HepG2 (cell line): ENCODE measurements at regions of chr12 and their contacts with region 1.

Region 1: DNA sequence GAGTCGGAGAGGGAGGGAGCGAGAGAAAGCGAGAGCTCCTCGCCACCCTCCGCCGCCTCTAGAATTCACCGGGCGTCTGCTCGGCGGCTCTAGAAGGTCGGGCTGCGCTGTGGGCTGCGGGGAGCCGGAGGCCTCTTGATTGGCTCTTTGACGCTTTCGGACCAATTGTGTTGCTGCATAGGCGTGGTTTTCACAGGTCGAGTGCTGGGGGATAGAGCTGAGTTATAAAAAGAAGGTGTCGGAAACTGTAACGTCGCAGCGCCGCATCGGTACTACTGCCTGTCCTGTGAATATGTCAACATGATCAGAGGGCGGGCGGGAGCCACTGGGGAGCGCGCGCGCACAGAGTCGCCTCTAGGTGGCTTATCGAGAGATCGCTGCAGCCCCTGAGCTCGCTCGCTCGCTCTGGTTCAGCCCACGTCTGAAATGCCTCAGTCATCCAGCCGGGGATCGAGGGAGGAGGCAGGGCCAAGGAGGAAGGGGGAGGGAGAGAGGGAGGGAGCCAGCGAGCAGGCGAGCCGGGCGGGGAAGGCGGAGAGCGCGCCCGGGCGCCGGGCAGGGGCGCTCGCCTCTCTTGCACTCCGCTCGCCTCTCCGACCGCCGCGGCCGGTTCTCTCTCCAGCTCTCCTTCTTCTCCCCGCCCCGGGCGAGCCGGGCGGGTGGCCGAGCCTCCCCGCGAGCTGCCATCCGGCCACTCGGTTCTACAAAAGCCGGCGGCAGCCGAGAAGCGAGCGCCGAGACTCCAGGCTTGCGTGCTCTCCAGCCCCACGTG is at the start of gene TBX3:
- DNase-seq: peak; percentile 98
- ATAC-seq: peak; percentile 92
- H3K4me3 ChIP-seq: peak within 1 kb of the TSS; percentile 81 to 97 (median 97)
- H3K27ac ChIP-seq: peak within 1 kb of the TSS; percentile 96
- H3K4me1 ChIP-seq: peaks cover 28% of the 10 kb centered on the region
- H3K27me3 ChIP-seq: no peaks in the 10 kb centered on the region; a peak in 1 of 5 replicates
- CTCF ChIP-seq: peak; percentile 91
- EP300 ChIP-seq: peak in 1 of 2 experiments; percentile 28; a peak in 2 of 4 replicates
- POLR2A ChIP-seq: peak; percentile 88 to 91
- RAD21 ChIP-seq: peak; percentile 86
- total RNA-seq, gene TBX3: 17.2 and 27.1 TPM in 2 replicates

Region 2: DNA sequence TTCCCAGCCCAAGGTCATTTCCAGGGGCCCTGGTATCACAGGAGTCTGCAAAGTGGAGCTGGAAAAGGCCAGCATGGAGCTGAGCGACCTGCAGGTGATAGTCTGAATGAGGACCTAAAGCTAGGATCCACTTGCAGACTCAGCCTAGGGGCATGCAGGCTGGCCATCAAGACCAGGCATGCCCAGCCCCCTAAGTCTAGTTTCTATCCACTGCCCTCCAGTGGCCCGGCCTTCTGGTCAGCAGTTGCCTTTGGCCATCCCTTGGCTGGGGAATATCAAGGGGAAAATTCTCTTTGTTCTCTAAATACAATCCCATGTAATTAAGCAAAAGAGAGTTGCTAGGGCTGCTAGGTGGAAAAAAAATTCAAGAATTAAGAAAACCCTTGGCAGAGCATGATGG is 1116.3 kb before region 1 on chr12:
- CTCF ChIA-PET with region 1: no interaction called
- POLR2A ChIA-PET with region 1: no interaction called
- in situ Hi-C with region 1: no loop called
- intact Hi-C with region 1: no loop called
- DNase-seq: no peak
- ATAC-seq: no peak
- H3K4me3 ChIP-seq: no peak overlapping the region
- H3K27ac ChIP-seq: no peak overlapping the region
- H3K4me1 ChIP-seq: no peaks in the 10 kb centered on the region
- H3K27me3 ChIP-seq: peaks cover 4 to 39% of the 10 kb centered on the region in 2 experiments
- CTCF ChIP-seq: no peak
- EP300 ChIP-seq: no peak
- POLR2A ChIP-seq: no peak
- RAD21 ChIP-seq: no peak

Region 3: GRCh38 chr12:114668151-114668885 is 16.0 kb before region 1 on chr12:
- CTCF ChIA-PET with region 1: no interaction called
- POLR2A ChIA-PET with region 1: interaction called, 101 read pairs
- in situ Hi-C with region 1: no loop called
- intact Hi-C with region 1: no loop called
- DNase-seq: peak; percentile 93
- ATAC-seq: peak; percentile 89
- H3K4me3 ChIP-seq: peak overlapping the region; percentile 64 to 81 (median 79)
- H3K27ac ChIP-seq: peak overlapping the region; percentile 79
- H3K4me1 ChIP-seq: peaks cover 45% of the 10 kb centered on the region
- H3K27me3 ChIP-seq: no peaks in the 10 kb centered on the region
- CTCF ChIP-seq: peak; percentile 90
- EP300 ChIP-seq: 0 out of 4 replicates have a peak, but pooled peaks of 1 of the 2 experiments have one; percentile 18
- POLR2A ChIP-seq: peak in 1 of 2 experiments; percentile 29; a peak in 1 of 4 replicates
- RAD21 ChIP-seq: peak; percentile 96

Region 4: GRCh38 chr12:114738460-114739184 is 54.3 kb after region 1 on chr12:
- CTCF ChIA-PET with region 1: no interaction called
- POLR2A ChIA-PET with region 1: interaction called, 20 read pairs
- in situ Hi-C with region 1: no loop called
- intact Hi-C with region 1: no loop called
- DNase-seq: peak; percentile 96
- ATAC-seq: peak; percentile 93
- H3K4me3 ChIP-seq: no peak overlapping the region
- H3K27ac ChIP-seq: peak overlapping the region; percentile 32
- H3K4me1 ChIP-seq: peaks cover 39% of the 10 kb centered on the region
- H3K27me3 ChIP-seq: no peaks in the 10 kb centered on the region
- CTCF ChIP-seq: peak; percentile 27; the same call in 1 of the 2 replicates
- EP300 ChIP-seq: peak in 1 of 2 experiments; percentile 85; a peak in 2 of 4 replicates
- POLR2A ChIP-seq: no peak
- RAD21 ChIP-seq: no peak

Region 5: DNA sequence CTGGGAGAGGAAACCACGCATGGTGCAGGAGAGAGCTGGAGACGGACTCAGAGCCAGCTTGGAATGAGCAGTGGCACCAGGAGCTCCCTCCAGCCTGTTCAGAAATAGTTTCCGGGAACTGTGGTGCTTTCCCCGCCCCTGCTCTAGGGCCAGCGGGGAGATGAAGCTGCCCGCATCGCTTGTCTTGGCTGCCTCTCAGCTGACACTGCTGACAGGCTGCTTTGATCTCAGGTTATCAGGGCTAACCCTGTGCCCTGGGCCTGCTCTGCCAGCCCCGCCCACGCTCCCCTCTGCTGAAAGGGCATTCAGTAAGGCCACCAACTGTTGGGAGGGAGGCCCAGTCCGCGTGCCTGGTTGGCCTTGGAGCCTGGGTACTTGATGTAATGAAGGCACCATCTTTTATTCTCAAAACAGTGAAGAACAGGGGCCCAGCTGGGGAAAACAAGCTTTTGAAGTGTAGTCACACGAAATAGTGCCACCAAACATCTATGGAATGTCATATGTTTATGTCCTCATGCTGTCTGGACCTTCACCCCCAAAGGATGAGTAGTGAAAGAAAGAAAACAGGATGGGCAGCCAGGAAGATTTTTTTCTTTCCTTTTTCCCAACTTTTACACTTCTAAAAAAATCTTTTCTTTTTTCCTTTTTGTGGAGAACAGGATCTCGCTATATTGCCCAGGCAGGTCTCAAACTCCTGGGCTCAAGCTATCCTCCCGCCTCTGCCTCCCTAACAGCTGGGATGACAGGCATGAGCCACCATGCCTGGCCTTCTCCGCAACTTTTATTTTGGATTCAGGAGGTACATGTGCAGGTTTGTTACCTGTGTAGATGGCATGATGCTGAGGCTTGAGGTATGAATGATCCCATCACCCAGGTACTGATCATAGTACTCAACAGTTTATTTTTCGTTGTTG is 115.5 kb after region 1 on chr12:
- CTCF ChIA-PET with region 1: no interaction called
- POLR2A ChIA-PET with region 1: interaction called, 72 read pairs
- in situ Hi-C with region 1: no loop called
- intact Hi-C with region 1: loop called (anchors 1 kb)
- DNase-seq: peak; percentile 100
- ATAC-seq: peak; percentile 99
- H3K4me3 ChIP-seq: no peak overlapping the region
- H3K27ac ChIP-seq: peak overlapping the region; percentile 85
- H3K4me1 ChIP-seq: peaks cover 46% of the 10 kb centered on the region
- H3K27me3 ChIP-seq: no peaks in the 10 kb centered on the region
- CTCF ChIP-seq: peak; percentile 36; the same call in 1 of the 2 replicates
- EP300 ChIP-seq: peak; percentile 91 to 98
- POLR2A ChIP-seq: peak; percentile 66 to 67
- RAD21 ChIP-seq: peak; percentile 65

Region 6: DNA sequence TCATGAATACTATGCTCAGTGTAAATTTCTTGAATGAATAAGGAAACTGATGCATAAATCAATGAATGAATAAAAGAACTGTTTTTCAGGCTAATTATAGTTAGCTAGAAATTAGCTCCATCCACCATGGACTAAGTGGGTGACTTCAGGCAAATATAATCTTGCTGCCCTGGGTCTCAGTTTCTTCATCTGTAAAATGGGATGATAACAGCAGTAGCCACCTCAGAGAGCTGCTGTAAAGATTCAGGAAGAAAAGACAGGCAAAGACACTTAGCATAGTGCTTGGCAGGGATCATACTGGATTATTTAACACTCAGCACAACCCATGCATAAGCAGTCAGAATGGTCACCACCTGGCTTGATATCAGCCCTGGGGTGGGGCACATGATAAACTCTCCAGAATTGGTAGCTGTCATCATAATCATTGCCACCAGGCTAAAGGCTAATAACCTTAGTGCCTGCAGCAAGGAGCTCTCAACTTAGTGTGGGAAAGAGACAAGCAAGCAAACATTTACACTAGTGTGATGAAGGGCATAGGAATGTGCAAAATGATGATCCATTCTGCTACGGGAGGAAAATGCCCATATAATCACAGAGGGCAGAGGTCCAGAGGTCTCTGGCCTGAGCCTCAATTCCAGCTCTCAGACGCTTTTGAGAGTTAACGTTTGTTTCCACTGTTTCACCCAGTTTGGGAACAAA is 234.4 kb after region 1 on chr12:
- CTCF ChIA-PET with region 1: no interaction called
- POLR2A ChIA-PET with region 1: interaction called, 15 read pairs
- in situ Hi-C with region 1: no loop called
- intact Hi-C with region 1: no loop called
- DNase-seq: peak; percentile 93
- ATAC-seq: peak; percentile 97
- H3K4me3 ChIP-seq: no peak overlapping the region
- H3K27ac ChIP-seq: peak overlapping the region; percentile 24
- H3K4me1 ChIP-seq: peaks cover 28% of the 10 kb centered on the region
- H3K27me3 ChIP-seq: no peaks in the 10 kb centered on the region
- CTCF ChIP-seq: no peak
- EP300 ChIP-seq: peak in 1 of 2 experiments; percentile 34; a peak in 1 of 4 replicates
- POLR2A ChIP-seq: no peak
- RAD21 ChIP-seq: no peak

Region 7: GRCh38 chr12:115423546-115423987 is 739.3 kb after region 1 on chr12:
- CTCF ChIA-PET with region 1: no interaction called
- POLR2A ChIA-PET with region 1: interaction called, 19 read pairs
- in situ Hi-C with region 1: no loop called
- intact Hi-C with region 1: no loop called
- DNase-seq: peak; percentile 98
- ATAC-seq: peak; percentile 67
- H3K4me3 ChIP-seq: no peak overlapping the region
- H3K27ac ChIP-seq: peak overlapping the region; percentile 86
- H3K4me1 ChIP-seq: peaks cover 100% of the 10 kb centered on the region
- H3K27me3 ChIP-seq: no peaks in the 10 kb centered on the region
- CTCF ChIP-seq: 0 out of 2 replicates have a peak, but pooled peaks have one; percentile 15
- EP300 ChIP-seq: peak; percentile 73 to 99; a peak in 3 of 4 replicates
- POLR2A ChIP-seq: no peak
- RAD21 ChIP-seq: peak; percentile 61